ENCODE measurements at regions of chr12 and their contacts with region 1.

Region 1: DNA sequence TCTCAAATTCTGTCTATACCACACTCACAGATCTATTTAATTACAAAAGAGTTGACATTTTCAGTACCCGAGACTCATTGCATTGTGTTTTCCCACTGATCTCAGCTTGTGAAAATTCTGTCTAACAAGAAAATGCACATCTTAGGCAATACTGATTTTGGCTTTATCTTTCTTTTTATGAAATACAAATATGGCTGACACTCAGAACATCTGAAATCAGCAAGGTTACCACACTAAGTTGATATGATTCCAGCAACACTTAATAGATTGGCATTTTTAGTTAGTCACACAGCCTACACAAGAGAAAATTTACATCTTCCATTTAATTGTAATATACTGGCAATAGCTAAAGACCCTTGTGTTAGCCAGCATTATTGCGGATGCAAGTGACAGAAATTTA is 40.3 kb downstream of the PEX5 start:
- DNase-seq: no peak
- ATAC-seq: no peak
- H3K4me3 ChIP-seq: no peak overlapping the region
- H3K27ac ChIP-seq: no peak overlapping the region
- H3K4me1 ChIP-seq: no peaks in the 10 kb centered on the region
- H3K27me3 ChIP-seq: peaks cover 0 to 14% (median 0%) of the 10 kb centered on the region in 7 donors
- CTCF ChIP-seq: no peak

Region 2: GRCh38 chr12:7624478-7624877 is 394.7 kb after region 1 on chr12:
- intact Hi-C with region 1: loop called in 1 of 10 experiments (anchors 5 kb)
- DNase-seq: no peak
- ATAC-seq: no peak
- H3K4me3 ChIP-seq: no peak overlapping the region
- H3K27ac ChIP-seq: no peak overlapping the region
- H3K4me1 ChIP-seq: no peaks in the 10 kb centered on the region
- H3K27me3 ChIP-seq: peaks cover 0 to 14% (median 0%) of the 10 kb centered on the region in 7 donors
- CTCF ChIP-seq: no peak

Measured in heart right ventricle (tissue), 16 donors.